ENCODE measurements at regions of chr22 and their contacts with region 1.

Region 1: GRCh38 chr22:46774253-46774979 is 12.0 kb downstream of the TBC1D22A start:
- DNase-seq: peak; percentile 26
- H3K4me3 Mint-ChIP-seq: peak overlapping the region; percentile 42
- H3K27ac Mint-ChIP-seq: peak overlapping the region; percentile 90
- H3K4me1 Mint-ChIP-seq: peaks cover 74% of the 10 kb centered on the region
- H3K27me3 Mint-ChIP-seq: no peaks in the 10 kb centered on the region

Region 2: GRCh38 chr22:46542011-46542985 is 232.1 kb before region 1 on chr22:
- CTCF ChIA-PET with region 1: no interaction called
- intact Hi-C with region 1: no loop called
- DNase-seq: peak; percentile 79
- H3K4me3 Mint-ChIP-seq: no peak overlapping the region
- H3K27ac Mint-ChIP-seq: no peak overlapping the region
- H3K4me1 Mint-ChIP-seq: peaks cover 12% of the 10 kb centered on the region
- H3K27me3 Mint-ChIP-seq: peaks cover 21% of the 10 kb centered on the region

Region 3: DNA sequence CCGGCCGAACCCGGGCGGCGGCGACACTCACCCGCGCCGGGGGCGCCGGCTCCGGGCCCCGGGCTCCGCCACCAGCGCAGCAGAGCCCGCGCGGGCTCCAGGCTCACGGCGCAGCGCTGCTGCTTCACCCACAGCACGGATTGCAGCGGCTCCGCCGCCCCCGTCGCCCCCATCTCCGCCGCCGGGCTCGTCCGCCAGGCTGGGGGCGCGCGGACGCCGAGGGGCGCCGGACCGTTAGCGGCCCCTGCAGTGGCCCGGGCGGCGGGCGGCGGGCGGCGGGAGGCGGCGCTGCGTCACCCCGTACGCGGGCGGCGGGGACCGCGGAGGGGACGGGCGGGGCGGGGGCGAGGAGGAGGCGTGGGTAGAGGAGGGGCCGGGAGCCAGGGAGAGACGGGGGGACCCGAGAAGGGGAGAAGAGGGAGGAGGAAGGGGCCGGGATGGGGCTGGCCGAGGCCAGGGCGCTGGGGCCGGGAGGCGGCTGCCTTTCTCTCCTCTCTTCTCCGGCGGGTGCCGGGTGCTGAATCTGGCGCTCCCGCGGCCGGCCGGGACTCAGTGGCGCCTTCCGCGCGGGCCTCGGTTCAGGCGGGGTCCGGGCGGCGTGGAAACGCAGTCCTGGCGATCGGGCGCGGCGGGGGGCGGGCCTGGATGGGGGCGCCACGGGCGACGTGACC is 36.3 kb before region 1 on chr22 and contains the start of gene CERK:
- CTCF ChIA-PET with region 1: interaction called, 3 read pairs
- intact Hi-C with region 1: loop called (anchors 1 kb)
- DNase-seq: peak; percentile 72
- H3K4me3 Mint-ChIP-seq: peak within 1 kb of the TSS; percentile 100
- H3K27ac Mint-ChIP-seq: peak within 1 kb of the TSS; percentile 99
- H3K4me1 Mint-ChIP-seq: peaks cover 40% of the 10 kb centered on the region
- H3K27me3 Mint-ChIP-seq: no peaks in the 10 kb centered on the region
- total RNA-seq, gene CERK: 32.6 to 34.9 TPM

Region 4: DNA sequence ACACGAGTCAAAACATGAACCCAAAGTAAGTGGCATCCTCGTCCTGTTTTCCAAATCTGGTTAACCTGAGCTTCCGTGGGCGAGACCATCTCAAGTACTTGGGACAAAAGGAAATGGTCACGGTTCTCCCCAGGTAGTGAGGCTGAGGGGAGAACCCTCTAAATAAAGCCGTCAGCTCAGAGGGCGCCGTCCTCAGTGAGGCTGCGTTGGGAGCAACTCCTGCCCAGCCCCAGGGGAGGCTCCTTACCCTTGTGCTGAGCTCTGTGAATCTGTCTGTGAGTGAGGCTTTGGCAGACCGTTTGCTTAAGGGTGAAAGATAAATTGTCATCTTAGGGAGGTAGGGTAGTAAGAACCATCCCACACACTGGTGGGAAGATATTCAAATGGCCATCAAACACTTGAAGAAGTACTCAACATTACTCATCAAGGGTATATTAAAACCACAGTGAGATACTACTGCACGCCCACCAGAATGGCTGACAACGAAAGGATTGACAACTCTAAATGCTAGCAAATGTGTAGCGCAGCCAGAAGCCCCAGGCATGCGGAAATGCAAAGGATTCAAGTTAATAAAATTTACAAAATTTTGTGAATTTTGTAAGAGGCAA is 309.1 kb after region 1 on chr22:
- CTCF ChIA-PET with region 1: no interaction called
- intact Hi-C with region 1: no loop called
- DNase-seq: no peak
- H3K4me3 Mint-ChIP-seq: no peak overlapping the region
- H3K27ac Mint-ChIP-seq: no peak overlapping the region
- H3K4me1 Mint-ChIP-seq: peaks cover 9% of the 10 kb centered on the region
- H3K27me3 Mint-ChIP-seq: no peaks in the 10 kb centered on the region